ENCODE measurements at regions of chr2 and their contacts with region 1.

Region 1: GRCh38 chr2:240893363-240893844 is 2.6 kb downstream of the MAB21L4 start:
- DNase-seq: peak; percentile 75
- H3K4me3 ChIP-seq: no peak overlapping the region
- H3K27ac ChIP-seq: no peak overlapping the region
- H3K4me1 ChIP-seq: peaks cover 29% of the 10 kb centered on the region
- H3K27me3 ChIP-seq: peaks cover 6% of the 10 kb centered on the region
- CTCF ChIP-seq: peak in 1 of 2 donors; percentile 13

Region 2: DNA sequence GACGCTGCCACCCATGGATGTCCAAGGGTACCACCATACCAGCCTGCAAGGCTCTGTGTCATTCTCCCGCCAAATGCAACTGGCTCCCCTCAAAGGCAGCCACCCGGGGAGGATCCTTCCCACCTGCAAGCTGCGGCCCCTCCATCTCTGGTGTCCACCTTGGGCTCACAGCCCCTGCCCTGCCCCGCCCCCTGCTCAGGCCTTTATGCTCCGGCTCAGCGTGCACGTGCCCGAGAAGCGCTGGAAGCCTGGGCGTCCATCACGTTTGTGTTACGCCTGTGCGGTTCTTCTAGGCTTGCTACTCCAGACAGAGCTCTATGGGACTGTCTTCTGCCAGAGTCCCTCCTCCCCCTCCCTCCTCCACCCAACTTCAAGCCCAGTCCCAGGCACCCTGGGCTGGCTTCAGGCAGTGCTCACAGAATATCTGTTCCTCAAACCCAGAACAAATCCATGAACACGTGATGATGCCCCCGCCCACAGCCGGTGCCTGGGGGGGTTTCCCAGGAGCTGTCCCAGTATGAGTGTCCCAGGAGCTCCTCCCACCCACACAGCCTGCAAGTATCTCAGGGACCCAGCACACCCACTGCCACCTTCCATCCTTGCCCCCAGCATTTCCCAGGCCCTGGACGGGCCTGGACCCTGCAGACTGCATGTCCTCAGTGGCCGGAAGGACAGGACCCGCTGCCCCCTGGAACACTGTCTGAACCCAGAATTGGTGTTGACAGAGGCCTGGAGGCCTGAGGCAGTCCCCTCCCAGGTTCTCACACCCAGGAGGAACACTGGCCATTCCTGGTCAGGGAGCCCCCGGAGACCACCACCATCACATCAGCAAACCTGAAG is 103.7 kb before region 1 on chr2:
- CTCF ChIA-PET with region 1: no interaction called
- dilution Hi-C with region 1: loop called (anchors 5 kb)
- in situ Hi-C with region 1: no loop called
- intact Hi-C with region 1: no loop called
- DNase-seq: no peak
- H3K4me3 ChIP-seq: no peak overlapping the region
- H3K27ac ChIP-seq: no peak overlapping the region
- H3K4me1 ChIP-seq: no peaks in the 10 kb centered on the region
- H3K27me3 ChIP-seq: peaks cover 2% of the 10 kb centered on the region
- CTCF ChIP-seq: no peak

Region 3: DNA sequence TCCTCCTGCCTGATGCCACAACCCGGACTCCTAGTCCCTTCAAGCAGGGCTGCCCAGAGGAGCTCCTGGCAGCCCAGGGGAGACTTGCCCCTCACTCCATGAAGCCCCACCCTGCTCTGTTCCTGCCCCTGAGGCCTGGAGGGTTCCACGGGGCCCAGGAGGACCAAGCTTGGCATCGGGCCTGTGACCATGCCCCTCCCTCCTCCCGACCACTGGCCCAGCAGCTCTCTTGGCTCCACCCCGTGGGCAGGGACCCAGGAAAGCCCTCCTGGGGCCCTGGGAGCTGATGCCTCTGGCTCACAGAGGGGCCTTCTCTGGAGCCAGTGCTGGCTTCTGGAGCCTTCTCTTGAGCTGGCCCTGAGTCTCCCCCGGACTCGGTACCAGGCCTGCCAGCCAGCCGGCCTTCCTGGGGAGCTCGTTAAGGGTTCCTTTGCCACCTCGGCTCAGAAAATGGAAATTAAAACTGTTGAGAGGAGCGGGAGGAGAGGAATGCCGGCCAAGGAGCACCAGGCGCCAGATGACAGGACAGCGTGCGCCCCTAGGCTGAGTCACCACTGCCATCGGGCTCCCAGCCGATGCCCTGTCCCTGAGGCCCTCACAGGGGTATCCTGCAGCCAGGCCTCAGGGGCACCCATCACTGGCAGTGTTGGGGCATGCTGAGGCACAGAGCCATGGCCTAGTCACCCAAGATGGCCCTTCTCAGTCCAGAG is 64.4 kb after region 1 on chr2:
- CTCF ChIA-PET with region 1: no interaction called
- dilution Hi-C with region 1: loop called (anchors 5 kb)
- in situ Hi-C with region 1: no loop called
- intact Hi-C with region 1: no loop called
- DNase-seq: no peak
- H3K4me3 ChIP-seq: no peak overlapping the region
- H3K27ac ChIP-seq: no peak overlapping the region
- H3K4me1 ChIP-seq: no peaks in the 10 kb centered on the region
- H3K27me3 ChIP-seq: peaks cover 23% of the 10 kb centered on the region
- CTCF ChIP-seq: no peak

Region 4: GRCh38 chr2:240998120-240998994 is 105.0 kb after region 1 on chr2 and contains the start of gene SNED1:
- CTCF ChIA-PET with region 1: no interaction called
- dilution Hi-C with region 1: loop called (anchors 5 kb)
- in situ Hi-C with region 1: no loop called
- intact Hi-C with region 1: no loop called
- DNase-seq: peak; percentile 54
- H3K4me3 ChIP-seq: peak within 1 kb of the TSS; percentile 11 to 56 (median 50)
- H3K27ac ChIP-seq: no peak within 1 kb of the TSS
- H3K4me1 ChIP-seq: peaks cover 3% of the 10 kb centered on the region
- H3K27me3 ChIP-seq: peaks cover 4% of the 10 kb centered on the region
- CTCF ChIP-seq: no peak
- total RNA-seq, gene SNED1: 0.64 to 3.7 TPM